ENCODE measurements at regions of chr3 and their contacts with region 1.

Region 1: GRCh38 chr3:30658328-30659052 is 52.1 kb downstream of the TGFBR2 start:
- DNase-seq: peak; percentile 46
- H3K4me3 Mint-ChIP-seq: peak overlapping the region; percentile 27
- H3K27ac Mint-ChIP-seq: peak overlapping the region; percentile 57
- H3K4me1 Mint-ChIP-seq: peaks cover 46% of the 10 kb centered on the region
- H3K27me3 Mint-ChIP-seq: no peaks in the 10 kb centered on the region
- CTCF ChIP-seq: no peak

Region 2: GRCh38 chr3:30370681-30371271 is 287.7 kb before region 1 on chr3:
- CTCF ChIA-PET with region 1: no interaction called
- POLR2A ChIA-PET with region 1: no interaction called
- intact Hi-C with region 1: loop called (anchors 1 kb)
- DNase-seq: no peak
- H3K4me3 Mint-ChIP-seq: no peak overlapping the region
- H3K27ac Mint-ChIP-seq: peak overlapping the region; percentile 73
- H3K4me1 Mint-ChIP-seq: peaks cover 25% of the 10 kb centered on the region
- H3K27me3 Mint-ChIP-seq: no peaks in the 10 kb centered on the region
- CTCF ChIP-seq: no peak

Region 3: GRCh38 chr3:30611613-30612436 is 46.7 kb before region 1 on chr3:
- CTCF ChIA-PET with region 1: interaction called, 7 read pairs
- POLR2A ChIA-PET with region 1: interaction called, 9 read pairs
- intact Hi-C with region 1: loop called (anchors 1 kb)
- DNase-seq: peak; percentile 84
- H3K4me3 Mint-ChIP-seq: peak overlapping the region; percentile 86
- H3K27ac Mint-ChIP-seq: peak overlapping the region; percentile 93
- H3K4me1 Mint-ChIP-seq: peaks cover 68% of the 10 kb centered on the region
- H3K27me3 Mint-ChIP-seq: no peaks in the 10 kb centered on the region
- CTCF ChIP-seq: no peak

Region 4: DNA sequence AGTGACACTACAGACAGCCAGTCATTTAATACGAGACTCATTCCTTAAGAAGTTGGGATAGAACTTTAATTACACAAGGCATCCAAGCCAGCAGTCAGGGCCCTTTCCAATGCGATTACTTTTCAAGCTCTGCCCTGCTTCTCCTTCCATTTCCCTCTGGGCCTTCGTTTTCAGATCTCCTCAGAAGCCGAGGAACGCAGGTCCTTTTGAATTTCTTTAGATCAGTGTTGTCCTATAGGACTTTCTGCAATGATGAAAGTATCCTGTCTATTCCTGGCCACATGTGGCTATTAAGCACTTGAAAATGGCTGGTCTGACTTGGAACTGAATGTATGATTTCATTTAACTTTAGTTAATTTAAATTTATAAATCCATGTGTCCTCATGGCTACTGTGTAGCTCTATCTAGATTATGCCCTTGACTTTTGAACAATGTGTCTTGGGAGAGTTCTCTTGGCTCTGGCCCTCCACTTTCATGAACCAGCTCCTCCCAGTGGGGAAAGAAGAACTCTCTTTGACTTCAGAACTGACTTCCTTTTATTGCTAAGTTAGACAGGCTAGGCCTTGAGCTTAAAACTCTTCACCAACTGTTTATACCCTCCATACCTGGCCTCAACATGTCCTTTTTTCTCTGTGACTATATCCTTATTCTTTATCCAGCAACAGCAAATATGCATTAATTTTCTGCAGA is 29.4 kb before region 1 on chr3:
- CTCF ChIA-PET with region 1: interaction called, 3 read pairs
- POLR2A ChIA-PET with region 1: interaction called, 13 read pairs
- intact Hi-C with region 1: no loop called
- DNase-seq: no peak
- H3K4me3 Mint-ChIP-seq: peak overlapping the region; percentile 19
- H3K27ac Mint-ChIP-seq: peak overlapping the region; percentile 77
- H3K4me1 Mint-ChIP-seq: peaks cover 63% of the 10 kb centered on the region
- H3K27me3 Mint-ChIP-seq: no peaks in the 10 kb centered on the region
- CTCF ChIP-seq: peak; percentile 9